WTC11 (cell line): ENCODE measurements at regions of chr11 and their contacts with region 1.

Region 1: DNA sequence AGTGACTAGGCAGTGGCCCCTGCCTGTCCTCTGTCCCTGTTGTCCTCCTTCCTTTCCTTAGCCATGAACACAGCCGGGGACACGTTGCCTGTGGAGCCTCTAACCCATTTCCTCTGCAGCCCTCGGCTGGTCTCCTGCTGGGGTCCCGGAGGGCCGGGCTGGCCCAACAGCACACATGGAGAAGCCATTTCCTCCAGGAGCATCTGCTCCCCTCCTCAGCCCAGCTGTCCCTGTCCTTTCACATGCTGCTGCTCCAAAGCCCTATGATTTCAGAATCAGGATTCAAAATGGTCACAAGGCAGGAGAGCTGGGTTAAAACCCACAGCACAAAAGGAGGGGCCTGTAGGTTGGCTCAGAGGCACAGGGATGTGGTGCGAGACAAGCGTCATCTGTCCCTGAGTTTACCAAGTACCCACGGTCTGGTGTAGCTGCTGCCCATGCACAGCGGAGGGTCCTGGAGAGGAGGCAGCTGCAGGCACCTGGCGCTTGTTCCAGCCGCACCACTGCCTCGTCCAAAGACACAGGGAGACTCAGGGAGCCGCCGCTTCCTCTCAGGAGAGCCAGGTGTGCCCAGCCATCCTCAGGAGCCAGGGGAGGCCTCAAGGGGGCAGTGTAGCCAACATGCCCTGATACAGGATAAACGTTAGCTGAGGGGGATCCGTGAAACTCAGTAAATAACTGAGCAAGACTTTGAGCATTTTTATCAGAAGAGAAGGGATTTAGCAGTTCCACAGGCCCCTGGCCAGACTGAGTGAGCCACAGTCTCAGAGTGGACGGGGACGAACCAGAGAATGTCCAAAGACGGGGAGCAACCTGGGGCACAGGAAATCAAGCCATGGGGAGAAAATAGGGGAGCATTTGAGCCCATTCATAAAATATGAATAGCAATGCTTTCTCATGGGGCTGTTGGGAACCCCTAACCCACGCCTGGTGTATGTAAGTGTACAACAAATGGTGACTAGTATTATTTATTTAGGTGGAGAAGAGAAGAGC is 3.9 kb upstream of the VSIG10L2 start:
- DNase-seq: peak; percentile 91
- ATAC-seq: peak; percentile 92
- H3K4me3 Mint-ChIP-seq: no peak overlapping the region
- H3K27ac Mint-ChIP-seq: peak overlapping the region; percentile 45
- H3K4me1 Mint-ChIP-seq: peaks cover 23% of the 10 kb centered on the region
- H3K27me3 Mint-ChIP-seq: no peaks in the 10 kb centered on the region; the same call in 1 of the 2 replicates
- CTCF ChIP-seq: peak; percentile 68

Region 2: DNA sequence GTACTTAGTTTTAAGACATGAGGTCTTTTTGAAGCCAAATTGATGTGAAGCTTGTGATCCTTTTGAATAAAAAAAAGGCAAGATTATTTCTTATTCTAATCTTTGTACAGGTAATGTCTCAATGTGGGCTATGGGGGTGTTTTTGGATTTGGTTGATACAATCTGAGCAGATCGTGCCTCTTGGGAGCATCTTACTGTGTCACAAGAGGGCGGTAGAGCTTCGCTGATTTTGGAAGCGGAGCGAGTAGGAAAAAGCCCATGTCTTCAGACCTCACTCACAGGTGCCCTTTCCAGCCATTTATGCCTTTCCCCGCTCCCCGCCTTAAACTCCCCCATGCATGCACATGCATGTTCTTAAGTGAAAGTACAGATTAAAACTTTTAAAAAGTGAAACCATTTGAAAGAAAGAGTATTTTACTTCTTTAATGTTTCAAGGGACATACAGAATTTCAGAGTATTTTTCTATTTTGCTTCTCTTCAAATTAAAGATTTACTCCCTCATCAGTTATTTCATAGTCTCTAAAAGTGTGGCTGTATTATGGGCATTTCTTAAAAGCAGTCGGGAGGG is 18.8 kb before region 1 on chr11:
- CTCF ChIA-PET with region 1: interaction called, 12 read pairs
- POLR2A ChIA-PET with region 1: no interaction called
- DNase-seq: peak; percentile 71
- ATAC-seq: peak; percentile 85
- H3K4me3 Mint-ChIP-seq: no peak overlapping the region
- H3K27ac Mint-ChIP-seq: no peak overlapping the region
- H3K4me1 Mint-ChIP-seq: peaks cover 8% of the 10 kb centered on the region; the same call in 1 of the 2 replicates
- H3K27me3 Mint-ChIP-seq: no peaks in the 10 kb centered on the region
- CTCF ChIP-seq: peak; percentile 44; the same call in 1 of the 2 replicates

Region 3: DNA sequence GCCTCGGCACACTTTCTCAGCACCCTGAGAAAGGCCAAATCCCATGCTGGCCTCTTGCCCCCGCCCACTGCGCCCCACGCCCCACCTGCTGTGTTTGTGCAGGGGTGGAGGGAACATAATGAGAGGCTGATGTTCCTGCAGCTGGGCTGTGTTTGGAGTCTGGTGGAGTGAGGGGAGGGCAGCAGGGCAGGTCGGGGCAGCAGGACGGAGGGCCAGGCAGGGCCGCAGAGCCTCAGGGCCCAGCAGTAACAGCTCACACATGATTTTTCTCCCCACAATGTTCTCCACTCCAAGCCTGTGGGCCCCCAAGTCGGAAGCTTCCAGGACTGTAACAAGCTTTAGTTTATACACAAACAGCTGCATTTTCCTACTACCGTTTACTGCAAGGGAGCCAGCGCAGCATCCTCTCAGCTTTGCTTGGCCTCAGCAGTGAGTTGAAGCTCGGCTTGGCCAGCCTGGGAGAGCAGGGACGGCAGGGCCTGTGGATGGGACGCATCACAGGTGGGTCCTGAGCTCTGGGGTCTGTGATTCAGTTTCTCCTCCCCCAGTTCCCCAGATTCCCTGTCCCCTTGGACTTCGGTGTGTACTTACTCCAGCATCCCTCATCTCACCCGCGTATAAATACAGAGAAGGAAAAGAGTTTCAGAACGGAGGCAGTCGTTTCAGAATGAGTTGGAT is 218.6 kb after region 1 on chr11:
- CTCF ChIA-PET with region 1: interaction called, 10 read pairs
- POLR2A ChIA-PET with region 1: no interaction called
- DNase-seq: no peak
- ATAC-seq: peak; percentile 25
- H3K4me3 Mint-ChIP-seq: no peak overlapping the region
- H3K27ac Mint-ChIP-seq: no peak overlapping the region
- H3K4me1 Mint-ChIP-seq: peaks cover 12% of the 10 kb centered on the region
- H3K27me3 Mint-ChIP-seq: peaks cover 5% of the 10 kb centered on the region; the same call in 1 of the 2 replicates
- CTCF ChIP-seq: no peak

Region 4: GRCh38 chr11:126194121-126194543 is 252.2 kb after region 1 on chr11:
- CTCF ChIA-PET with region 1: interaction called, 16 read pairs
- POLR2A ChIA-PET with region 1: interaction called, 4 read pairs
- DNase-seq: peak; percentile 35
- ATAC-seq: peak; percentile 58
- H3K4me3 Mint-ChIP-seq: no peak overlapping the region
- H3K27ac Mint-ChIP-seq: no peak overlapping the region
- H3K4me1 Mint-ChIP-seq: no peaks in the 10 kb centered on the region
- H3K27me3 Mint-ChIP-seq: no peaks in the 10 kb centered on the region
- CTCF ChIP-seq: peak; percentile 38